Activated naive CD4-positive, alpha-beta T cell treated with anti-CD3 and anti-CD28 coated beads for 36 hours (primary cell): ENCODE measurements at regions of chr7 and their contacts with region 1.

Region 1: GRCh38 chr7:48094751-48095562 is 5.9 kb downstream of the UPP1 start:
- DNase-seq: no peak
- H3K4me3 Mint-ChIP-seq: no peak overlapping the region
- H3K27ac Mint-ChIP-seq: peak overlapping the region; percentile 94
- H3K4me1 Mint-ChIP-seq: peaks cover 84% of the 10 kb centered on the region
- H3K27me3 Mint-ChIP-seq: no peaks in the 10 kb centered on the region

Region 2: GRCh38 chr7:47979145-47979831 is 115.7 kb before region 1 on chr7 and contains the start of gene HUS1:
- CTCF ChIA-PET with region 1: no interaction called
- intact Hi-C with region 1: loop called (anchors 1 kb)
- DNase-seq: peak; percentile 94
- H3K4me3 Mint-ChIP-seq: peak within 1 kb of the TSS; percentile 90
- H3K27ac Mint-ChIP-seq: peak within 1 kb of the TSS; percentile 94
- H3K4me1 Mint-ChIP-seq: peaks cover 28% of the 10 kb centered on the region
- H3K27me3 Mint-ChIP-seq: no peaks in the 10 kb centered on the region
- total RNA-seq, gene HUS1: 55.0 to 61.2 TPM

Region 3: GRCh38 chr7:48074204-48074654 is 20.7 kb before region 1 on chr7:
- CTCF ChIA-PET with region 1: no interaction called
- intact Hi-C with region 1: no loop called
- DNase-seq: no peak
- H3K4me3 Mint-ChIP-seq: no peak overlapping the region
- H3K27ac Mint-ChIP-seq: no peak overlapping the region
- H3K4me1 Mint-ChIP-seq: no peaks in the 10 kb centered on the region
- H3K27me3 Mint-ChIP-seq: no peaks in the 10 kb centered on the region